PC-3 (cell line): ENCODE measurements at regions of chrX and their contacts with region 1.

Region 1: DNA sequence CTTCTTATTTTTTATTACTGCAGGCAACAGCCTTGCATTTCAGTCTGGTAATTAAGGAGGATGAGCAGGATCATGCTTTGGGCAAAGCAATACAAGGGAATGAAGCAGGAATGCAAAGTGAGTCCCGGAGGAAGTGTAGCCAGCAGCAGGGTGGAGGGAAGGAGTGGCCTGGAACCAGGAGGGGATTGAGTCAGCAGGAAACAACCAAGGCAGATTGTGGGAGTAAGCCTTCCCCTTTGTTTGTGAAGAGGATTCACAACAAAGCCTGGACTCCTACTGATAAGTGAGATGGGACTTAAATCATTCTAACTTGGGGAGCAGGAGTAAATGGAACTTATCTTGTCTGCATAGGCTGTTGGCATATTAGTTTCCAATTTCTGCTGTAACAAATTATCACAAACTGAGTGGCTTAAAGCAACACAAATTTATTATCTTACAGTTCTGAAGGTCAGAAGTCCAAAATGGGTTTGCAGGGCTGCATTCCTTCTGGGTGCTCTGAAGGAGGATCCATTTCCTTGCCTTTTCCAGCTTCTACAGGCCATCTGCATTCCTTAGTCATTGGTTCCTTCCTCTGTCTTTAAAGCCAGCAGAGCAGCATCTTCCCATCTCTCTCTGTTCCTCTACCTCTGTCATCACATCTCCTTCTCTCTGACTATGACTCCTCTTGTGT is 93.2 kb upstream of the AP1S2 start:
- DNase-seq: peak; percentile 64
- ATAC-seq: peak; percentile 91
- H3K4me3 ChIP-seq: no peak overlapping the region
- H3K27ac ChIP-seq: peak overlapping the region; percentile 60
- H3K4me1 ChIP-seq: peaks cover 27% of the 10 kb centered on the region
- H3K27me3 ChIP-seq: no peaks in the 10 kb centered on the region
- CTCF ChIP-seq: no peak

Region 2: DNA sequence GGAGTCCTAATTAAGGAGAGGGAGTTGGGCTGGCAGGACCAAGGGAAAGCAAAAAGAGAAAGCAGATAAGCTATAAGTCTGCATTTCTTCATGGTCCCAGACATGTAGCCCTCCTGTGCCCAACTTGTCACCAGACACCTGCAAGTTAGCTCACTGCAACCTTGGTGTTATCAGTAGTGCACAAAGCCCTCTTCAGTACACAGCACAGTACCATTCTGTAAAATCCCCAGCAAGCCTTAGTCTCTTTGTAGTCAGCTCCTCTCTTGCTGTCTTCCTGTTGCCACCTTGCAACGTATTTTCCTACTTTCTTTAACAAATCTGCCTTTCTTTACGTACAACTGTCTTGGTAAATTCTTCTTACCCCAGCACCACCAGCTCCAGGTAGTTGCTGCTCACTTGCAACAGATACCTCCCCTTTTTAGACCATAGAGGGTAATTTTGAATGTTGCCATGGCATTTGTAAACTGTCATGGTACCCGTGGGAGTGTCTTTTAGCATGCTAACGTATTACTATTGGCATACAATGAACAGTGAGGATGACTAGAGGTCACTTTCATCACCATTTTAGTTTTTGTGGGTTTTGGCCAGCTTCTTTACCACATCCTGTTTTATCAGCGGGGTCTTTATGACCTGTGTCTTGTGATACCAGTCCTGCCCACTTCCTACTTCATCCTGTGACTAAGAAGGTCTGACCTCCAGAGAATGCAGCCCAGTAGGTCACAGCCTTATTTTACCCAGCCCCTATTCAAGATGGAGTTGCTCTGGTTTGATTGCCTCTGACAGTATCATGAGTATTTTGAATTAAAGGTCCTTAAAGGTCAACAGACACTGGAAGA is 64.9 kb before region 1 on chrX:
- CTCF ChIA-PET with region 1: no interaction called
- POLR2A ChIA-PET with region 1: no interaction called
- intact Hi-C with region 1: loop called (anchors 10 kb)
- DNase-seq: peak; percentile 54
- ATAC-seq: peak; percentile 46; the same call in 1 of the 2 replicates
- H3K4me3 ChIP-seq: no peak overlapping the region
- H3K27ac ChIP-seq: no peak overlapping the region
- H3K4me1 ChIP-seq: peaks cover 10% of the 10 kb centered on the region
- H3K27me3 ChIP-seq: no peaks in the 10 kb centered on the region
- CTCF ChIP-seq: no peak